GM10248 (cell line): ENCODE measurements at regions of chr1 and their contacts with region 1.

Region 1: GRCh38 chr1:167442124-167442848 is 76.0 kb downstream of the CD247 start:
- DNase-seq: peak; percentile 89
- CTCF ChIP-seq: peak; percentile 95

Region 2: DNA sequence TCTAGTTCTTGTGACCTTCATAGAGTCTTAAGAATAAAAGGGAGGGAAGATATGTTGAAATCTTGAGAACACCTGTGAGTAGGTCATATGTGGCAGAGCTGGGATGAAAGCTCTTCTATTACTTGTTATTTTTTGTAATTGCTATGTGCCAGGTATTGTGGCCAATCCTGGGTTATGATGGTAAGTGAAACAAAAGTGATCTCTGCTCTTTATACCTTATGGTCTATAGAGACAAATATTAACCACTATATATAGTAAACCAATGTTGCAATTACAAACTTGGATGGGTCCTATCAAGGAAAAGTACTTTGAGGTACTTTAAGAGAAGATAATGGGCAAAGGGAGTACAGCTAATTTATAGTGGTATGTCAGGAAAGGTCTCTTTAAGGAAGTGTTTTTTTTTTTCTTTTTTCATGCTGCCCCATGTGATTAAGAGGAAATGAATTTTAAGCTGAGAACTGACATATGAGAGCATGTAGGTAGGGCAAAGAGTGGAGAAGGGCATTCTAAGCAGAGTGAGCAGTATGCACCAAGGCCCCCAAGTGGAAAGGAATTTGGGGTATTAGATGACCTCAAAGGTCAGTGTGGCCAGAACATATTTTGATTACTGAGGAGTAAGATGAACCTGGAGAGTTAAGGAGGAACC is 178.3 kb before region 1 on chr1:
- CTCF ChIA-PET with region 1: interaction called, 75 read pairs
- POLR2A ChIA-PET with region 1: no interaction called
- DNase-seq: no peak
- CTCF ChIP-seq: no peak

Region 3: DNA sequence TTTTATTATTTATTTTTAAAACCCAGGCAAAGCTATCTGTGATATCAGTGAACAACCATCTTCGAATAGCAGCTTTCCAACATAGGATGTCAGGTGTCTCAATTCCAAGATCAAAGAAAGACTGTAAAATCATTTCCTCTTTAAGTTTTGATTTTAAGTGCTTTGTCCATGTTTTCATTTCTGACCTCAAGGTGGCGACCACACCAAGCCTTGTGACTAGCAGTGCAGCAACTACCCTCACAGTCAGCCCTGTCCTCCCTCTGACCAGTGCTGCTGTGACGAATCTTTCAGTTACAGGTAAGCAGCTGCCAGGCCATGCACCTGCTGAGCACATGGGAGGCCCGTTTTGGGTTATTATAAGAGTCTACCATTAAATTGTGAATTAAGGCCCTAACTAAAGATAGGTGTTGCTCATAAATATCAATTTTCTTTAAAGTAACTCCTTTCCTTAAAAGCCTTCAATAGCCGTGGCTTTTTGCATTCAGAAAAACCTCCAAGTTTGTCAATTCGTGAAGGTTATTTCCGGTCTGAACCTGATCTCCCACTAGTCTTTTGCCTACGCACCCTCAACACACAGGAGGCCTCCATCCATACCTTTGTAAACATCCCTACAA is 40.9 kb before region 1 on chr1:
- CTCF ChIA-PET with region 1: interaction called, 12 read pairs
- POLR2A ChIA-PET with region 1: no interaction called
- DNase-seq: peak; percentile 46
- CTCF ChIP-seq: peak; percentile 53

Region 4: DNA sequence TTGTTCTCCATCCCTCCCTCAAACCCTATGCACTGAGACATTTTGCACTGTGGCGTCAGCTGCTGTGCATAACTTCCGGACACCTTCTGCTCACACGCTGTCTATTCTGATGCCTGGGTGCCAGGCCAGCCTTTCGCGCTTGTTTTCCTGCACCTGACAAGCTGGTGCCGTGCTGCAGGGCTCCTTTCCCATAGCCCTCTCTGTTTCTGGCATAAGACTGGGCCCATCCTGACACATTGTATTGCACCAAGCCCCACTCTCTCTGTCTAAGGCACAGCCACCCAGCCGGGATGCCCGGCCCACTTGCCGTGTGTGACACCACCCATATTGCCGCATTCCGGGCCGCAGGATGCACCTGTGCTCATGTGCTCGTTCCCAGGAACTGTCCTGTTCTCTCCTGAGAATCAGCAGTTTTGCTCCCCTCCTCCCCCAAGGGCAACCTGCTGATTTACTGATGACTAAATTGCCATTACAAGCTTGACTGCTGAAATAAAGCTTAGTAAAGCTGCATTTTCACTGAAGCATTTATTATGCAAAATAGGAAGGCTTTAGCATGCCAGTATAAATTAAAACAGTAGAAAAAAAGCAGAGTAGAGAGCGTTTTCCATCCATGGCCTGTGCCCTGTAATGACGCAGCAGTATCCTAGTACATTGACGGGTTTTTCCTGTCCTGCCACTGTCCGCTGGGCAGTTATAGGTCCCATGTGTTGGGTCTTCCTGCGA is 12.0 kb before region 1 on chr1:
- CTCF ChIA-PET with region 1: interaction called, 38 read pairs
- POLR2A ChIA-PET with region 1: no interaction called
- DNase-seq: no peak
- CTCF ChIP-seq: no peak

Region 5: DNA sequence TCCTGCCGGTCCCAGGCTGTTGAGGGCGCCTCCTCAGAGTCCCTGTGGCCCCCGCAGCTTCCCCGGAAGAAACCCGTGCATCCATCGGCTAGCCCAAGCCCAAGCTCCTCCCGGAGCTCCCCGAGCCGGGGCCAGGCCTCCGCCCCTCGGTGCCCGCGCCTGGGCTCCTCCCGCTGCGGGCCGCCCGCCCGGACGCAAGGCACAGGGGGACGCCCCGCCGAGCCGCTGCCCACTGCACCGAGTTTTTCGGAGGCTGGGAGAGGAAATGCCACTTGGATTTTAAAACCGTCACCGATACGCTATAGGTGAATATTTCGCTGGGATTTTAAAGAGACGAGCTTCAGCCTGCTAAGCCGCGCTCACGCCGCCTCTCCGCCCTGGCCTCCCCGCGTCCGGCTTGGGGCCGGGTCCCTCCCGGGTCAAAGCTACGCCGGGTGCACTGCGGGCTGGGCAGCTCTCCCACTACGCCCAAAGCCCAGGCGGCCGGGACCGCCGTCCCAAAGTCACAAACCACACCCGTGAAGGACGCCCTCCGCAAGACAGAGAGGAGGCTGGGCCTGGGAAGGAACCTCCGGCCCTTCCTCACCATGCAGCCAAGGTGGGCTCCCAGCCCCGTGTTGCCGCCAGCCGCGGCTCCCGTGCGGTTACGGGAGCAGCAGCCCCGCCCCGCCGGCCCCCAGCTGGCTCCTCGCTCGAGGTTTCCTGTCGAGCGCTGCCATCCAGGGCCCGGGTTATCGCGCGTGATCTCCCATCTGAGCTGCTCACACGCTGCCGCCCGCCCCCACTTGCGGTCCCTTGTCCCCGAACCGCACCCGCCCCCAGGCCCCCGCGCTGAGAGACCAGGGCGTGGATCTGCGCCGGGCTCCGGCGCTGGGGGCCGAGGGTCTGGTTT is 12.9 kb after region 1 on chr1:
- CTCF ChIA-PET with region 1: interaction called, 12 read pairs
- POLR2A ChIA-PET with region 1: no interaction called
- DNase-seq: peak; percentile 67
- CTCF ChIP-seq: no peak